ENCODE measurements at regions of chr1 and their contacts with region 1.

Region 1: GRCh38 chr1:186212544-186213226 is 162.4 kb downstream of the TPR start:
- DNase-seq: peak in 1 of 3 donors; percentile 57
- ATAC-seq: peak; percentile 97 to 99 (median 98)
- H3K4me3 ChIP-seq: no peak overlapping the region
- H3K27ac ChIP-seq: no peak overlapping the region
- H3K4me1 ChIP-seq: no peaks in the 10 kb centered on the region
- H3K27me3 ChIP-seq: no peaks in the 10 kb centered on the region
- CTCF ChIP-seq: peak; percentile 77 to 96 (median 86)
- POLR2A ChIP-seq: no peak

Region 2: GRCh38 chr1:185813401-185813979 is 399.2 kb before region 1 on chr1:
- intact Hi-C with region 1: loop called (anchors 10 kb)
- DNase-seq: no peak
- ATAC-seq: peak; percentile 76 to 87 (median 80)
- H3K4me3 ChIP-seq: no peak overlapping the region
- H3K27ac ChIP-seq: no peak overlapping the region
- H3K4me1 ChIP-seq: no peaks in the 10 kb centered on the region
- H3K27me3 ChIP-seq: no peaks in the 10 kb centered on the region
- CTCF ChIP-seq: peak; percentile 58 to 67 (median 66)
- POLR2A ChIP-seq: no peak